ENCODE measurements at regions of chr11 and their contacts with region 1.

Region 1: GRCh38 chr11:3700410-3700809 is 29.2 kb upstream of the CHRNA10 start:
- DNase-seq: no peak
- ATAC-seq: peak; percentile 54 to 76 (median 71)
- H3K4me3 ChIP-seq: no peak overlapping the region
- H3K27ac ChIP-seq: peak overlapping the region; percentile 33
- H3K4me1 ChIP-seq: peaks cover 8% of the 10 kb centered on the region
- H3K27me3 ChIP-seq: no peaks in the 10 kb centered on the region
- CTCF ChIP-seq: no peak

Region 2: GRCh38 chr11:3753110-3753509 is 52.7 kb after region 1 on chr11:
- intact Hi-C with region 1: loop called in 1 of 2 experiments (anchors 10 kb)
- DNase-seq: no peak
- ATAC-seq: no peak
- H3K4me3 ChIP-seq: no peak overlapping the region
- H3K27ac ChIP-seq: no peak overlapping the region
- H3K4me1 ChIP-seq: no peaks in the 10 kb centered on the region
- H3K27me3 ChIP-seq: no peaks in the 10 kb centered on the region
- CTCF ChIP-seq: no peak

Measured in psoas muscle (tissue), 8 donors.